ENCODE measurements at regions of chr20 and their contacts with region 1.

Region 1: GRCh38 chr20:13119583-13119982 is 101.5 kb upstream of the ISM1 start:
- DNase-seq: peak; percentile 86
- H3K4me3 Mint-ChIP-seq: no peak overlapping the region
- H3K27ac Mint-ChIP-seq: no peak overlapping the region
- H3K4me1 Mint-ChIP-seq: no peaks in the 10 kb centered on the region
- H3K27me3 Mint-ChIP-seq: no peaks in the 10 kb centered on the region

Region 2: DNA sequence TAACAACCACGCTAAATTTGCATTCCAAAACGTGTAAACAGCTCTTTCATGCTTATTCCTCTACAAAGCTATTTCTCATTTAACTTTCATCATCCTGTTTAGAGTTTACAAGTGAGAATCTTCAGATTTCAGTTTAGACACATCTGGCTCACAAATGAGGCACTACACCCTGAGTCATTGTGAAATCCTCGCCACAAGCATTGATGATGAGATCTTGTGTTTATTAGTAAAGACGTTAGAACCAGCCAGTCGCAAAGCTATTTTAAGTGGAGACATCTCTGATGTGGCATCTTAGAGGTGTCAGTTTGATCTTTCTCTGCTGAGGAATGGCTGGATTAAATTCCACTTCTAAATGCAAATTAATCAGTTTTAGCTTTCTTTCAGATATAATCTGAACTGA is 93.2 kb after region 1 on chr20:
- intact Hi-C with region 1: loop called (anchors 5 kb)
- DNase-seq: peak; percentile 59
- H3K4me3 Mint-ChIP-seq: no peak overlapping the region
- H3K27ac Mint-ChIP-seq: peak overlapping the region; percentile 16
- H3K4me1 Mint-ChIP-seq: peaks cover 7% of the 10 kb centered on the region
- H3K27me3 Mint-ChIP-seq: peaks cover 46% of the 10 kb centered on the region

Region 3: GRCh38 chr20:13261460-13262301 is 142.1 kb after region 1 on chr20:
- intact Hi-C with region 1: loop called (anchors 1 kb)
- DNase-seq: peak; percentile 89
- H3K4me3 Mint-ChIP-seq: no peak overlapping the region
- H3K27ac Mint-ChIP-seq: no peak overlapping the region
- H3K4me1 Mint-ChIP-seq: peaks cover 12% of the 10 kb centered on the region
- H3K27me3 Mint-ChIP-seq: no peaks in the 10 kb centered on the region

Region 4: GRCh38 chr20:13302647-13303450 is 183.3 kb after region 1 on chr20:
- intact Hi-C with region 1: loop called (anchors 1 kb)
- DNase-seq: peak; percentile 83
- H3K4me3 Mint-ChIP-seq: no peak overlapping the region
- H3K27ac Mint-ChIP-seq: no peak overlapping the region
- H3K4me1 Mint-ChIP-seq: peaks cover 4% of the 10 kb centered on the region
- H3K27me3 Mint-ChIP-seq: no peaks in the 10 kb centered on the region

Region 5: DNA sequence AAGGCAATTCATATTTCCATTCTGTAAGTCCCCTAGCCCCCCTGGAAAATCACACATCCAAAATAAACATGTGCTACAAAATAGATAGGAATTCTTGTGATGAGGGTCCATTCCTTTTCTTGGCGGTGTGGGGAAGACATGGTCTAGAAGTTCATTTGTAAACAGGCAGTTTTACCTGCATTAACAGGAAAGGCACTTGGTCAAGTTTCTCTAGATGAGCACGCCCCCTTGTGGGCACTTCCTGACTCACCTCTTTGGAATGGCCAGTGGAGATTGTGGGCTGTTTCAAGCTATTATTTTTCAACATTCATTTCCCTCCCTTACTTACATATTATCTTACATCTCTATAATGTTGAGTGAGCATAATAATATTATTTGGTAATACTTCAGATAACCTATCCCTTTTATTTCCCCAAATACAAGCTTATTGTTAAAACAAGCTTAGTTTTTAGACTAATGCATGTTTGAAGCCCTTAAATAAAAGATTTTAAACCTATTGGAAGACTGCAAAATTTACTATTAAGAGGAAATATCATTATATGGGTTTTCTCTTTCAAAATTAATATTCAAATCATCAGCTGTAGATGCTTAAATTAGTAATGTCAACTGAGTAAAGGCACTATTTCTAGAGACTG is 427.0 kb after region 1 on chr20:
- intact Hi-C with region 1: loop called (anchors 1 kb)
- DNase-seq: peak; percentile 90
- H3K4me3 Mint-ChIP-seq: no peak overlapping the region
- H3K27ac Mint-ChIP-seq: no peak overlapping the region
- H3K4me1 Mint-ChIP-seq: peaks cover 2% of the 10 kb centered on the region
- H3K27me3 Mint-ChIP-seq: no peaks in the 10 kb centered on the region

Region 6: GRCh38 chr20:13703265-13703664 is 583.7 kb after region 1 on chr20:
- intact Hi-C with region 1: no loop called
- DNase-seq: no peak
- H3K4me3 Mint-ChIP-seq: no peak overlapping the region
- H3K27ac Mint-ChIP-seq: no peak overlapping the region
- H3K4me1 Mint-ChIP-seq: no peaks in the 10 kb centered on the region
- H3K27me3 Mint-ChIP-seq: no peaks in the 10 kb centered on the region

Region 7: DNA sequence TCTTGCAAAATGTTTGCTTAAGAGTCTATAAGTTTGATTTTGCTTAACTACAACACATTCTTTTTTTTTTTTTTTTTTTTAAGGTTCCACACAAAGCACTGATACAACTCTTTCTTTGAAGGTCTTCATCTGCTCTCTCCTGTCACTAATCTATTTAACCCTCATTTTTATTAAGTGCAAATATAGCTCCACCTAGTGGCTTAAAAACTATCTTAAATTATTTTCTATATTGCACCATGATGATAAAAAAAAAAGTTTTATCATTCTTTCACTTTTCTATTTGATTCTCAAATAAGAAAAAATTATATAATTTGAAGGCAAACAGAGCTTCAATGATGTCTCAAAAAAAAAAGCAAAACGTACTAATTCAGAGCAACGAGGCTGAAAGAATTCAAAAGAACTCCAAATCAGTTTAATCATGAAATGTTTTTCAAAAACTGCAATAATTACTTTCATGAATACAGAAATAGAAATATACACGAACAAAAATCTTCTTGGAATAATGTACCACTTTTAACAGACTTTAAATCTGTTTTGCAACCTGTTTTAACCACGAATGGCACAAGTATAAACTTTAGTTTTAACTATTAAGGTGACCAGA is 652.4 kb after region 1 on chr20:
- intact Hi-C with region 1: loop called (anchors 5 kb)
- DNase-seq: no peak
- H3K4me3 Mint-ChIP-seq: no peak overlapping the region
- H3K27ac Mint-ChIP-seq: no peak overlapping the region
- H3K4me1 Mint-ChIP-seq: peaks cover 8% of the 10 kb centered on the region
- H3K27me3 Mint-ChIP-seq: no peaks in the 10 kb centered on the region